Common myeloid progenitor, CD34-positive (primary cell): ENCODE measurements at regions of chr5 and their contacts with region 1.

Region 1: DNA sequence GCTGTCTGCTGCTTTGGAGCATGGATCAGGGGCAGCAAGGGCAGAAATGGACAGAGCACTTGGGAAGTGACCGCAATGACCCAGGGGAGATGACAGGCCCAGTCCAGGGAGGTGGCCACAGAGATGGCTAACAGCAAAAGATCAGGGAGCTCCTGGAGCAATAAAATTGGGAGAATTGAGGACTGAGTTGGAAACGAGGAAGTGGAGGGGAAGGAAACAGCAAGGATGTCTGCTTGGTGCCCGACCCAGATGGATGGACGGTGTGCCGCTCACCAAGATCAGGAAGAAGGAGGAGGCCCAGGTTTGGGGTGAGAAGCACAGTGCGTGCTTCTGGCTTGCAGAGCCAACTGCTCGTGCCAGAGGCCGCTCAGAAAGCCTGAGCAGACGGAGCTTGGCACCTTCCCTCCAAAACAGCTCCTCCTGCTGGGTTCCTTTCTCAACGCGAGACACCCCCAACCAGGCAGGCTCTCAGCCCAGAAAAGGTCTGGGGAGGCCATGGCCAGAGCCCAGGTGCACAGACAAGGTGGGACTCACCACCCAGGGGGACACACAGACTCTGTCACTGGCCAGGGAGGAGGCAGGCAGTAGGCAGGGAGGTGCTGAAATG is 1.7 kb upstream of the SLC34A1 start:
- DNase-seq: peak; percentile 69 to 78 (median 76)
- H3K4me3 ChIP-seq: no peak overlapping the region
- H3K27ac ChIP-seq: no peak overlapping the region
- H3K4me1 ChIP-seq: peaks cover 5 to 35% (median 28%) of the 10 kb centered on the region in 4 experiments
- H3K27me3 ChIP-seq: no peaks in the 10 kb centered on the region

Region 2: DNA sequence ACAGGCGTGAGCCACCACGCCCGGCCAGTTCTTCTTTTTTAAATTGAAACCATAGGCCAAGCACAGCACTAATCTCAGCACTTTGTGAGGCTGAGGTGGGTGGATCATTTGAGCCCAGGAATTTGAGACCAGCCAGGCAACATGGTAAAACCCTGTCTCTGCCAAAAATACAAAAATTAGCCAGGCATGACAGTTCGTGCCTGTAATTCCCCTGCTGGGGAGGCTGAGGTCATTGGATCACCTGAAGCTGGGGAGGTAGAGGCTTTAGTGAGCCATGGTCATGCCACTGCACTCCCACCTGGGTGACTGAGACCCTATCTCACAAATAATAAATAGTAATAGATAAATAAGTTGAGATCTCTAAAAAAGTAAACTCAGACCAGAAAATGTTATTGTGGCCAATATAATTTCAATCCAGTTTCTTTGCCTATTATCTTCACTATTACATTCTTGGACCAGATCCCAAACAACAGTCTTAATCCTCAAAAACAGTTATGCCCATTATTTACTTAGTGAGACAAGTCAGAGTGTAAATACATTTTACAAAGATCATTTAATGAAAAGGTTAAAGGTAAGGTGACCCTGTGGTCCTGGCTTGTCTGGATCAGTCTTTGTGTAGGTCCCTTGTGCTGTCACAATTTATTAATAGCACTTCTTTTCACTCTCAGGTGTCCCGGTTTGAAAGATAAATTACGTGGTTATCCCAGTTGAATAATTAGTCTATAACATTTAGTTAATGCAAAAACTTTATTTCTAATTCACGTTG is 132.6 kb before region 1 on chr5:
- CTCF ChIA-PET with region 1: no interaction called
- POLR2A ChIA-PET with region 1: no interaction called
- DNase-seq: no peak
- H3K4me3 ChIP-seq: no peak overlapping the region
- H3K27ac ChIP-seq: no peak overlapping the region
- H3K4me1 ChIP-seq: no peaks in the 10 kb centered on the region
- H3K27me3 ChIP-seq: no peaks in the 10 kb centered on the region

Region 3: GRCh38 chr5:177327539-177328522 is 54.7 kb before region 1 on chr5:
- CTCF ChIA-PET with region 1: interaction called, 11 read pairs
- POLR2A ChIA-PET with region 1: no interaction called
- DNase-seq: peak in 2 of 3 donors; percentile 60 to 66
- H3K4me3 ChIP-seq: peak overlapping the region in 1 of 7 experiments; percentile 34
- H3K27ac ChIP-seq: no peak overlapping the region
- H3K4me1 ChIP-seq: peaks cover 3 to 52% (median 32%) of the 10 kb centered on the region in 4 experiments
- H3K27me3 ChIP-seq: no peaks in the 10 kb centered on the region

Region 4: GRCh38 chr5:177370488-177371119 is 11.9 kb before region 1 on chr5:
- CTCF ChIA-PET with region 1: interaction called, 102 read pairs
- POLR2A ChIA-PET with region 1: no interaction called
- DNase-seq: peak; percentile 83 to 85 (median 85)
- H3K4me3 ChIP-seq: peak overlapping the region in 1 of 7 experiments; percentile 72
- H3K27ac ChIP-seq: no peak overlapping the region
- H3K4me1 ChIP-seq: peaks cover 0 to 48% (median 41%) of the 10 kb centered on the region in 4 experiments
- H3K27me3 ChIP-seq: no peaks in the 10 kb centered on the region